PC-9 (cell line): ENCODE measurements at regions of chr19 and their contacts with region 1.

Region 1: GRCh38 chr19:39057615-39058014 is 25.3 kb upstream of the FBXO27 start:
- DNase-seq: peak; percentile 15 to 80
- H3K4me3 ChIP-seq: no peak overlapping the region
- H3K27ac ChIP-seq: no peak overlapping the region
- H3K4me1 ChIP-seq: peaks cover 3% of the 10 kb centered on the region; the same call in 1 of the 2 replicates
- H3K27me3 ChIP-seq: no peaks in the 10 kb centered on the region
- CTCF ChIP-seq: no peak

Region 2: DNA sequence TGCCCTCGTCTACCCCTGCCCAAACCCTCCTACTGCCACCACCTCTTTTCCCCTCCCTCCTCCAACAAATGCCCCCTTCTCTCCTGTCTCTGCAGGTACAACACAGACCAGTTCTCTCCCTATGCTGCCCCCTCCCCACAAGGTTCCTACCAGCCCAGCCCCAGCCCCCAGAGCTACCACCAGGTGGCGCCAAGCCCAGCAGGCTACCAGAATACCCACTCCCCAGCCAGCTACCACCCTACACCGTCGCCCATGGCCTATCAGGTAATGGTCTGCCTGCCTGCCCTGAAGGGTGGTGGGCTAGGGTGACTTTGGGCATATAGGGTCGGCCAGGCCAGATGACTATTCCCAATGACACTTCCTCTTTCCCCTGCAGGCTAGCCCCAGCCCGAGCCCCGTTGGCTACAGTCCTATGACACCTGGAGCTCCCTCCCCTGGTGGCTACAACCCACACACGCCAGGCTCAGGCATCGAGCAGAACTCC is 416.6 kb after region 1 on chr19:
- CTCF ChIA-PET with region 1: interaction called, 10 read pairs
- POLR2A ChIA-PET with region 1: no interaction called
- intact Hi-C with region 1: no loop called
- DNase-seq: peak in 1 of 2 experiments; percentile 48
- H3K4me3 ChIP-seq: no peak overlapping the region
- H3K27ac ChIP-seq: no peak overlapping the region
- H3K4me1 ChIP-seq: no peaks in the 10 kb centered on the region
- H3K27me3 ChIP-seq: no peaks in the 10 kb centered on the region
- CTCF ChIP-seq: peak; percentile 84